Activated T-helper 2 cell treated with anti-CD3 and anti-CD28 coated beads, Interferon-gamma antibody, Interleukin-2, Interleukin-4, amounts not matched to agents 10 μg/mL and 5 μg/mL and 100 μg/mL, durations not matched to agents 14 hours and 24 hours and 36 hours (primary cell): ENCODE measurements at regions of chr4 and their contacts with region 1.

Region 1: GRCh38 chr4:16196478-16197393 is 29.5 kb downstream of the TAPT1 start:
- DNase-seq: no peak
- H3K4me3 Mint-ChIP-seq: no peak overlapping the region
- H3K27ac Mint-ChIP-seq: no peak overlapping the region
- H3K4me1 Mint-ChIP-seq: peaks cover 16% of the 10 kb centered on the region
- H3K27me3 Mint-ChIP-seq: no peaks in the 10 kb centered on the region

Region 2: GRCh38 chr4:16026160-16026761 is 170.5 kb before region 1 on chr4:
- intact Hi-C with region 1: loop called (anchors 5 kb)
- DNase-seq: no peak
- H3K4me3 Mint-ChIP-seq: no peak overlapping the region
- H3K27ac Mint-ChIP-seq: no peak overlapping the region
- H3K4me1 Mint-ChIP-seq: peaks cover 16% of the 10 kb centered on the region
- H3K27me3 Mint-ChIP-seq: peaks cover 13% of the 10 kb centered on the region

Region 3: DNA sequence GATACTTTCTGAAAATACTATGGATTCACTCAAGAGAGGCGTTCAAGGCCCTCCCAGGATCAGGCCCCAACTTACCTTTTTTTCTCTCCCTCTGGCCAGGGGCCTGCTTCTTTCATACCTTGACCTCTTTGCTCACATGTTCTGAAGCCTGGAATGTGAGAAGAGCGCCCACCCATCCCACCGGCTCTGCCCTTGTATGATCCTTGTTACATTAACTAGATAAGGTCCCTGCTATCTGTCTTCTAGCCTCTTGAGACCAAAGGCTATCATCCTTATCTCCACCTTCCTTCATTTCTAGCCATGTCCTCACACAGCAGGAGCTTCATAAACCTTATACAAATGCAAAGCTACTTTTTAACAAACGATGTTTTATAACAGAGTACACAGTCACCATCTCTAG is 158.8 kb before region 1 on chr4:
- intact Hi-C with region 1: no loop called
- DNase-seq: no peak
- H3K4me3 Mint-ChIP-seq: no peak overlapping the region
- H3K27ac Mint-ChIP-seq: no peak overlapping the region
- H3K4me1 Mint-ChIP-seq: no peaks in the 10 kb centered on the region
- H3K27me3 Mint-ChIP-seq: peaks cover 8% of the 10 kb centered on the region

Region 4: GRCh38 chr4:16231570-16232232 is 35.0 kb after region 1 on chr4:
- intact Hi-C with region 1: loop called (anchors 5 kb)
- DNase-seq: no peak
- H3K4me3 Mint-ChIP-seq: no peak overlapping the region
- H3K27ac Mint-ChIP-seq: no peak overlapping the region
- H3K4me1 Mint-ChIP-seq: peaks cover 27% of the 10 kb centered on the region
- H3K27me3 Mint-ChIP-seq: peaks cover 6% of the 10 kb centered on the region